BJ (cell line): ENCODE measurements at regions of chr19 and their contacts with region 1.

Region 1: GRCh38 chr19:53808710-53809125 is 15.4 kb downstream of the NLRP12 start:
- DNase-seq: no peak
- H3K4me3 ChIP-seq: no peak overlapping the region
- H3K27me3 ChIP-seq: no peaks in the 10 kb centered on the region
- CTCF ChIP-seq: peak; percentile 69

Region 2: DNA sequence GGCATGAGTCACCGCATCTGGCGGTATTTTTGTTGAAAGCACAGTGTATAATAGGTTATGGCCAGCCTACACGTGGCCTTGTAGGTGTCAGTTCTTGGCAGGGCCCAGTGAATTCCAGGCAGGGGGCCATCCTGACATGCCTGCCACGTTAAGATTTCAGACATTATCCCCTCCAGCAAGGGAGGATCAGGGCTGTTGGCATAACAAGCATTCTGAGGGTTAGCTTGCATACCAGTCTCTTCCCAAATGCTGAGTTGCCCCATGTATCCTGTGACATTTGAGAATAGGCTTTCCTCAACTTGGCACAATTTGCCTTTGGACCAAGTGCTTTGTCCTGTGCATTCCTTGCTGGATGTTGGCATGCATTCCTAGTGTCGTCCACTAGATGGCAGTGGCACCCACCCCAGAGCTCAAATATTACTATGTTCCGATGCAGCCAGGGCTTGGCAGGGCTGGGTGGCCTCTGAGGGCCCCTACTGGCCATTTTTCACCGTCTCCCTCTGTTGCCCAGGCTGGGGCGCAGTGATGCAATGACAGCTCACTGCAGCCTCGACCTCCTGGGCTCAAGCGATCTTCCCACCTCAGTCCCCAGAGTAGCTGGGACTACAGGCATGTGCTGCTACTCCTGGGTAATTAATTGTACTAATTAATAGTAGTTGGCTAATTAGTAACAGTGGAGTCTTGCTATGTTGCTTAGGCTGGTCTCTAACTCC is 15.8 kb before region 1 on chr19:
- CTCF ChIA-PET with region 1: interaction called, 40 read pairs
- POLR2A ChIA-PET with region 1: no interaction called
- DNase-seq: peak; percentile 27
- H3K4me3 ChIP-seq: no peak overlapping the region
- H3K27me3 ChIP-seq: no peaks in the 10 kb centered on the region
- CTCF ChIP-seq: peak; percentile 99

Region 3: DNA sequence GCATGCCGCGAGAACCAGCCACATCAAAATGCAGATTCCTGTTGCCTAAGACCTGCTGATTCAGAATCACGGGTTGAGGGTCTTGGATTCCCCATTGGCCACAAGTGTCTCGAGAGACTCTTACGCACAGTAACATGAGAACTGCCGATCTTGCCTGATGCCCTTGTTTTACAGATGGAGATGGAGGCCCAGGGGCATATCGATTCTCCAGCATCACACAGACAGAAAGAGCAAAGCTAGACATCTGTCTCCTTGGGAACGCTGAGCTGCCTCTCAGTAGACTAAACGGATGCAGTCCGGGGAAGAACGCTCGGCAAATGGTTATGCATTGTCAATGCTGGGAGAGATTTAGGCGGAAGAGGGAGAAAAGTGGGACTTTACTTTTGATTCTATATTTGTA is 10.0 kb after region 1 on chr19:
- CTCF ChIA-PET with region 1: interaction called, 29 read pairs
- POLR2A ChIA-PET with region 1: no interaction called
- DNase-seq: no peak
- H3K4me3 ChIP-seq: no peak overlapping the region
- H3K27me3 ChIP-seq: no peaks in the 10 kb centered on the region
- CTCF ChIP-seq: no peak

Region 4: GRCh38 chr19:54029930-54030490 is 221.3 kb after region 1 on chr19:
- CTCF ChIA-PET with region 1: interaction called, 182 read pairs
- POLR2A ChIA-PET with region 1: no interaction called
- DNase-seq: no peak
- H3K4me3 ChIP-seq: no peak overlapping the region
- H3K27me3 ChIP-seq: no peaks in the 10 kb centered on the region; the same call in 1 of the 2 replicates
- CTCF ChIP-seq: peak; percentile 77

Region 5: DNA sequence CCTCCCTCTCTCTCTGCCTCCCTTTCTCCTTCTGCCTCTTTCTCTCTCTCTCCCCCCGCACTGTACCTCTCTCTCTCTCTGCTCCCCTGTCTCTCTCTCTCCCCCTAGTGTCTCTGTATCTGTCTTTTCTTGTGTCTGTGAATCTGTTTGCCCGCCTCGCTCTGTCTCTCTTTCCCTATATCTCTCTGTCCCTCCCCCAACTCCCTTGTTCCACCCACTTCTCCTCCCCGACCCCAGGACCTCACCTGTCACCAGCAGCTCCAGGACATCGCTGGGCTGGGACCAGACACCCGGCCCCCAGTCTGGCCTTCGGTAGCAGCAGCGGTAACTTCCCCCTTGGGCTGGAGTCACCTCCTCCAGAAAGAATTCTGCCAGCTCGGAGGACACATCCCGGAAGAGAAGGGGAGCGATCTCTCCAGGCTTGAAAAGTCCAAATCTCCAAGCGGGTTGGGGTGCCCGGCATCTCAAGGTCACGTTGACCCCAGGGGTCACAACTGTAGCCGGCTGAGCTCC is 288.0 kb after region 1 on chr19:
- CTCF ChIA-PET with region 1: interaction called, 13 read pairs
- POLR2A ChIA-PET with region 1: no interaction called
- DNase-seq: no peak
- H3K4me3 ChIP-seq: peak overlapping the region; percentile 30
- H3K27me3 ChIP-seq: no peaks in the 10 kb centered on the region
- CTCF ChIP-seq: peak; percentile 59